Cardiac septum (tissue), 1 donor: ENCODE measurements at regions of chr5 and their contacts with region 1.

Region 1: DNA sequence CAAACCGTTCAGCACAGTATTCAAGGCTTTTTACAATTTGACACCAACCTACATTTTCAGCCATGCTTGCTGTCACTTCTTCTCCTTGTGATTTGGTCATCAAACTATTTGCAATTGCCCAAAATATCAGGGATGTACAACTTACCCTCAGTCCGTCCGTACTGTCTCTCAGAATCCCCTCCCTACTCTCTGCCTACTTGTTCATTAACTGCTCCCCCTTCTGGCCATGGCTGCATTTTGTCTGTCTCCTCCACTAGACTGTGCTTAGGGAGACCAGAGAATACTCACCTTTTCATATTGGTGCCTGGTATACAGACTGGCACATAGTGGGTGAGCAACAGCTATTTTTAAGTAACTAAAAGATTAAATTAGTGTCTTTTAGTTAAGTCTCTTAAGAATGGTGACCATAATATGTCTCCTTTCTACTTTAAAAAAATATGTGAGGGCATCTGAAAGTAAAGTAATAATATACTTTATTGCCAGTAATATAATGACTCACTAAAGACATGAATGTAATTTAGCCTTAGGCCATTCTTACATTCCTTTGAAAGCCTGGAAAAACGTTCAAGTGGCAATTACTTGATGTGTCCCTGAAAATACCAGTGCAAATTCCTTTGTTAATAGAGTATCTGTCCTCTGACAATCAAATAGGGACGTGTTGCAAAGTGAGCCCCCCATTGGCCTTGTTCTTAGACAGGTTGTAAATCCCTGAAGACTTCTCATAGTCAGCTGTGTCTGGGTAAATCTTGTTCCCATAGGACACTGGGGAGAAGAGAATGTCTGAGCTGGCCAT is 27.8 kb downstream of the PRLR start:
- DNase-seq: no peak

Region 2: DNA sequence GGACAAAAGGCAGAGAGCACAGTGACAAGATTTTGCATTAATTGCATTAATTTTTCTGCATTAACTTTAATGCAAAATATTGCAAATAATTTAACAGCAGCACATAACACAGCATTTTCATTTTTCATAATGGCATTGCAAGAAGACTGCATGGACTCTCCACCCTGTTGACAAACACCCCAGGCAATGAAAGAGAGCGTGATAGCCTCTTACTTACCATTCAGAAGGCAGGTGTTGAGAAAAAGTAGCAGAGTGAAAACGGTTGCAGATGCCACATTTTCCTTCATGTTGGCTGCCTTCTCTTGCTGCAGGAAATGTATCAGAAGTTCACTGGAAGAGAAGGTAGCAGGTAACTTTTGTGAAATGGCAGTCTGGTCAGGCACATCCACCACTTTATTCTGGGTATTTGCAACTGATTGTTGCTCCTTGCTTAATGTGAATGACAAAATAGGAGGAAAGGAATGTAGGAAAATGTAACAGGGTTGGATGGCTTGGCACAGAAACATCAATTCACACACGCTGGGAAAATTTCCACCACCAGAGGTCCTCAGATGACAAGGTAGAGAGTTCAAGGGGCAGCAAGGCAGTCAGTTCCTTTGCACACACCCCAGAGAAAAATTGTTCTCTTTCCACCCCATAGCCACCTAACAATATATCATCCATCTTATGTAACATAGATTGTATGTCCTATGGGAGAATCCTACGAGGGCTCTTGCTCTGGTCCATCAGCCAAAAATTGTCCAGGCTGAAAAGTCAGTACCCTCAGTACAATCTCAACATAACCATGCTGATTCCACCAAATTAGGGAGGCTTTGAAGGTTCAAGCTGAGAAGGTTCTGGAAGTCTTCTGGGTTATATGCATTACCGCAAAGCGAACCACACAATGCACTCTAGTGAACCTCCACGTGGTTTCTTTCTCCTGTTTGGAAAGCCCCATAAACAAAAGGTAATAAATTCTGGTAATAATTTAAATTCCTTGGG is 112.9 kb before region 1 on chr5:
- intact Hi-C with region 1: loop called (anchors 5 kb)
- DNase-seq: no peak

Region 3: DNA sequence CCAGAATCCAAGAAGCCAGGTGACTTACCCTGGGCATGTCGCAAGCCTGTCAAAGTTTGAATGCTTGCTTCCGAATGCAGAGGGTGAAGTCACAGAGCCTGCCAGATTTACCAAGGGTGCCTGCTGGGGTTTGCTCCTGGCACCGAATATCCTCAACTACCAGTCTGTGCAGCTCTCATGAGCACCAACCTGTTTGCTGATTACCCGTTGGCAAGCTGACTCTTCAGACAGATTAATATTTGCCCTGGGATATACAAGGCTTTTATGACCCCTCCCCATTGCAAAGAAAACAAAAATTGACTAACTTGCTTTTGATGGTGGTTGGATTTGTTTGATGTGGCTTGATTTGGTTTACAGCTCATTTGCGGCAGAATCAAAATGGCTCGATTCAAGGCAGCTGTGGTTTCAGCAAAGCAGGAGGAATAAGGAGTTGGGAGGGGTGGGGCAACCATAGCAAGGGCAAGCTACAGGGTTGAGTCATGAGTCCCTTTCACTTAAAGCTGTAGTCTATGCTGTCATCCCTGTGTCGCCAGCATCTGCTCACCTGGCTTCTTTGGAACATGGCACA is 72.5 kb before region 1 on chr5:
- intact Hi-C with region 1: no loop called
- DNase-seq: no peak